GM12878 (cell line): ENCODE measurements at regions of chr5 and their contacts with region 1.

Region 1: GRCh38 chr5:14351845-14352712 is 208.9 kb downstream of the TRIO start:
- DNase-seq: no peak
- ATAC-seq: peak; percentile 98
- H3K4me3 ChIP-seq: no peak overlapping the region
- H3K27ac ChIP-seq: peak overlapping the region; percentile 11; the same call in 1 of the 2 replicates
- H3K4me1 ChIP-seq: peaks cover 7% of the 10 kb centered on the region; the same call in 1 of the 2 replicates
- H3K27me3 ChIP-seq: no peaks in the 10 kb centered on the region
- CTCF ChIP-seq: peak; percentile 89 to 98 (median 96)
- EP300 ChIP-seq: no peak
- POLR2A ChIP-seq: no peak
- RAD21 ChIP-seq: peak; percentile 81

Region 2: GRCh38 chr5:13987843-13988464 is 364.1 kb before region 1 on chr5:
- CTCF ChIA-PET with region 1: interaction called, 7 read pairs
- POLR2A ChIA-PET with region 1: no interaction called
- RAD21 ChIA-PET with region 1: no interaction called
- SMC1A ChIA-PET with region 1: interaction called, 11 read pairs
- in situ Hi-C with region 1: loop called (anchors 25 kb)
- intact Hi-C with region 1: loop called (anchors 5 kb)
- DNase-seq: no peak
- ATAC-seq: peak; percentile 84
- H3K4me3 ChIP-seq: no peak overlapping the region
- H3K27ac ChIP-seq: no peak overlapping the region
- H3K4me1 ChIP-seq: no peaks in the 10 kb centered on the region
- H3K27me3 ChIP-seq: peaks cover 0 to 2% of the 10 kb centered on the region in 2 experiments; a peak in 1 of 4 replicates
- CTCF ChIP-seq: peak; percentile 70 to 89 (median 83)
- EP300 ChIP-seq: no peak
- POLR2A ChIP-seq: no peak
- RAD21 ChIP-seq: peak; percentile 97

Region 3: DNA sequence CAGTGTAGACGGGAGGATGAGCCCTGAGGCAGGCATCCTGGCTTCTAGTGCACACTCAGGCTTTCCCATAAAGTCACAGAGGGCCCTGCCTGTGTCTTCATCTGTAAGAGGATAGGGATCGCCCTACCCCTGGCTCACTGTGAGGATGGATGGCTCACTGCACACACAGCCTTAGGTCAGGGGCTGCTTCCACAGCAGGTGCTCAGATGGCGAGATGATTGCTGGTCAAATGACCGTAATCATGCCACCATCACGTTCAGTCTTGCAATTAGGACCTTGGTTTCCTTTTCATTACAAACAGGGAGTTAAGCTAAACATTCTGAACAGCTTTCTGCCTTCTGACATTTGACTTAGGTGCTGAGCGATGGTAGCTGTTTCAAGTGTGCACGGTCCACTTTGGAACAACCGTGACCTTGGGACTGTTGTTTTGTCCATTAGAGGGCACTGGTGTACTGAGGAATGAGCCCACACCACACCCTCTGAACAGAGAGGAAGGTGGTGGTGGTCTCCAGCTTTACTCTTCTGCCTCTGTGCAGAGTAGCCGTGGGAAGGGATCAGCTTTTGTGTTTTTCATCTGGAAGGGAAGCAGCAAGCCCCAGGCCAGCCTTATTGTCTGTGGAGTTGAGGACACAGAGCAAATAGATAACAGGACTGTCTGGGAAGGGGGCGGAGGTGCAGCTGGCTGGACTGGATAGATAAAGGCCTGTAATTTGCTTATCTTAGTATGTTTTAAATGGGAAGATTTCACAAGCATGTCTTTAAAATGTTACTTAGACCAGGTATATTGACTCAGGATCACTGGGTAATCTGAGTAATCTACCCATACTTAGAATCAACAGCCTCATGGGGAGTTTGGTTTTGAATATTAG is 25.8 kb before region 1 on chr5:
- CTCF ChIA-PET with region 1: interaction called, 12 read pairs
- POLR2A ChIA-PET with region 1: no interaction called
- RAD21 ChIA-PET with region 1: no interaction called
- SMC1A ChIA-PET with region 1: no interaction called
- in situ Hi-C with region 1: no loop called
- intact Hi-C with region 1: no loop called
- DNase-seq: no peak
- ATAC-seq: peak; percentile 55
- H3K4me3 ChIP-seq: no peak overlapping the region
- H3K27ac ChIP-seq: no peak overlapping the region
- H3K4me1 ChIP-seq: peaks cover 8% of the 10 kb centered on the region
- H3K27me3 ChIP-seq: no peaks in the 10 kb centered on the region
- CTCF ChIP-seq: peak; percentile 22 to 35 (median 32); a peak in 4 of 6 replicates
- EP300 ChIP-seq: no peak
- POLR2A ChIP-seq: no peak
- RAD21 ChIP-seq: 0 out of 2 replicates have a peak, but pooled peaks have one; percentile 10

Region 4: GRCh38 chr5:14374100-14374499 is 22.0 kb after region 1 on chr5:
- CTCF ChIA-PET with region 1: interaction called, 11 read pairs
- POLR2A ChIA-PET with region 1: no interaction called
- RAD21 ChIA-PET with region 1: no interaction called
- SMC1A ChIA-PET with region 1: no interaction called
- in situ Hi-C with region 1: no loop called
- intact Hi-C with region 1: no loop called
- DNase-seq: no peak
- ATAC-seq: no peak
- H3K4me3 ChIP-seq: no peak overlapping the region
- H3K27ac ChIP-seq: no peak overlapping the region
- H3K4me1 ChIP-seq: no peaks in the 10 kb centered on the region
- H3K27me3 ChIP-seq: no peaks in the 10 kb centered on the region
- CTCF ChIP-seq: no peak
- EP300 ChIP-seq: no peak
- POLR2A ChIP-seq: no peak
- RAD21 ChIP-seq: no peak

Region 5: GRCh38 chr5:14650052-14650451 is 298.0 kb after region 1 on chr5:
- CTCF ChIA-PET with region 1: interaction called, 46 read pairs
- POLR2A ChIA-PET with region 1: no interaction called
- RAD21 ChIA-PET with region 1: interaction called, 22 read pairs
- SMC1A ChIA-PET with region 1: interaction called, 23 read pairs
- in situ Hi-C with region 1: loop called (anchors 5 kb)
- intact Hi-C with region 1: loop called (anchors 1 kb)
- DNase-seq: no peak
- ATAC-seq: no peak
- H3K4me3 ChIP-seq: no peak overlapping the region
- H3K27ac ChIP-seq: no peak overlapping the region
- H3K4me1 ChIP-seq: no peaks in the 10 kb centered on the region
- H3K27me3 ChIP-seq: no peaks in the 10 kb centered on the region
- CTCF ChIP-seq: no peak
- EP300 ChIP-seq: no peak
- POLR2A ChIP-seq: no peak
- RAD21 ChIP-seq: no peak